A673 (cell line): ENCODE measurements at regions of chr11 and their contacts with region 1.

Region 1: GRCh38 chr11:131694526-131695424 is 324.4 kb downstream of the NTM start:
- DNase-seq: peak; percentile 87
- H3K4me3 ChIP-seq: no peak overlapping the region
- H3K27ac ChIP-seq: no peak overlapping the region
- H3K4me1 ChIP-seq: peaks cover 7% of the 10 kb centered on the region
- H3K27me3 ChIP-seq: no peaks in the 10 kb centered on the region
- CTCF ChIP-seq: peak; percentile 93

Region 2: GRCh38 chr11:131584785-131585592 is 109.8 kb before region 1 on chr11:
- CTCF ChIA-PET with region 1: no interaction called
- POLR2A ChIA-PET with region 1: no interaction called
- intact Hi-C with region 1: no loop called
- DNase-seq: peak; percentile 27
- H3K4me3 ChIP-seq: no peak overlapping the region
- H3K27ac ChIP-seq: no peak overlapping the region
- H3K4me1 ChIP-seq: no peaks in the 10 kb centered on the region
- H3K27me3 ChIP-seq: peaks cover 48% of the 10 kb centered on the region
- CTCF ChIP-seq: peak; percentile 50

Region 3: GRCh38 chr11:131658952-131659351 is 35.8 kb before region 1 on chr11:
- CTCF ChIA-PET with region 1: no interaction called
- POLR2A ChIA-PET with region 1: no interaction called
- intact Hi-C with region 1: no loop called
- DNase-seq: no peak
- H3K4me3 ChIP-seq: no peak overlapping the region
- H3K27ac ChIP-seq: no peak overlapping the region
- H3K4me1 ChIP-seq: no peaks in the 10 kb centered on the region
- H3K27me3 ChIP-seq: peaks cover 62% of the 10 kb centered on the region
- CTCF ChIP-seq: no peak

Region 4: DNA sequence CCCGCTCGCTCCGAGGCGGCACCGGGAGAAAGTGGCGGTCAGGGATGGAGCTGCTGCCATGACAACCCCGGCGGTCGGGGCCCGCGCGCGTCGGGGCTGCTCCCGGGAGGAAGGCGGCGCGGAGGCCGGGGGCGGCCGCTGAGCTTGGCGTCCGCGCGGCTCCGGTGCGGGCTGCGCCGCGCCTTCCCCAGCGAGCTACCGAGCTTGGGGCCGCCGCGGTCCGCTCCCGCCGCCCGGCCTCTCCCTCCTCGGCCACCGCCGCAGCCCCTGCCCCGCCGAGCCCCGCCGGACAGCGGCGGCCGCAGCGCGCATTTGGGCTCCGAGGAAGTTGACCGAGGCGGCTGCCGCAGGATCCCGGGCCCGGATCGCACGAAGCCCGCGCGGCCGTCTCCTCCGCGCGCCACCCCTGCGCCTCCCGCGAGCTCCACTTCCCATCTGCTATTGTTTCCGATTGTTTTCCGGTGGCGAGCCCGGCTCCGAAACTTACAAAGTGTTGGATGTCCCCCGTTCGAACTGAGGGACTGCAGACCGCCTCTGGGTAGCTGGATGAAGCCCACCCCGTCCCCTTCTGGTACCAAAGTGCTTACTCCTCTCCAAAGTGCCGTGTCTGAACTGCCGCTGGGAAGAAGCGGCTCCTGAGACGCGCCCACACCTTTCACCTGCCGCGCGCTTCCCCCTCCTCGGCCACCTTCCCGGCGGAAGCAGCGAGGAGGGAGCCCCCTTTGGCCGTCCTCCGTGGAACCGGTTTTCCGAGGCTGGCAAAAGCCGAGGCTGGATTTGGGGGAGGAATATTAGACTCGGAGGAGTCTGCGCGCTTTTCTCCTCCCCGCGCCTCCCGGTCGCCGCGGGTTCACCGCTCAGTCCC is 216.0 kb after region 1 on chr11:
- CTCF ChIA-PET with region 1: interaction called, 10 read pairs
- POLR2A ChIA-PET with region 1: no interaction called
- intact Hi-C with region 1: loop called (anchors 5 kb)
- DNase-seq: peak; percentile 56
- H3K4me3 ChIP-seq: peak overlapping the region; percentile 62
- H3K27ac ChIP-seq: peak overlapping the region; percentile 91
- H3K4me1 ChIP-seq: peaks cover 71% of the 10 kb centered on the region
- H3K27me3 ChIP-seq: no peaks in the 10 kb centered on the region
- CTCF ChIP-seq: no peak

Region 5: DNA sequence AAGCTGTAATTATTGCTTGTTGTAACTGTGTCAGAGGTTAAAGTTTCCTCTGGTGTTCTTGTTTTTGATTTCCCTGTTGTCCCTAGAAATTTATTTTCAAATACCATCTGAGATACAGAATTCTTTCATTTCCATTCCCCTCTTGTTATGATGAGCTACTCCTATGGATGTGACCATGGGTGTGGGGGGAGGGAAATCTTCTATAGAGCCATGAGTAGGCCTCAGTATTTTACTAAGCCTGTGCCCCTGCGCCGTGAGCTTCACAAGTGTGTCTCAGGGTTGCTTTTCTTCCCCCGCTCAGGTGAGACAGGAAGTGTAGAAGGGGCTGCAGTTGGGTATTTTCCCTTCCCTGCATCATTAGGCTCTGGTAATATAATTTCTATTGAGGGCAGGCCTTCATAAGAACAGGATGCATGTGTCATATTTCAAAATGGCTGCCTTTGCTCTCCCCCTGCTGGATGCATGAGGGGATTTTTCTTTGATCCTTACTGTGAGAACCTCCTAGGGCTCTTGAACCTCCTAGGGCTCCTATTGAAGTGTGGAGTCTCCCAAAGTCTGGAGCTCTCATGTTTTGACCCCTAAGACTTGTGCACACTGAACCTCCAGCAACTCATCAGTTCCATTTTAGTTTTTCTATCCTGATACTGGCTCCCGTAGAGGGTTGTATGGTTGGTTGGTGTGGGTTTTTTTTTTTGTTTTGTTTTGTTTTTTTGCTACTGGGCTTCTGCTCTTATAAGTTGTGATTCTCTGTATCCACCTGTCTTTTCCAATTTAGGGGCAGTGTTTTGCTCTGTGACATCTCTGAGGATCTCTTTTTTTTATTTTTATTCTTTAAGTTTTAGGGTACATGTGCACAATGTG is 333.8 kb after region 1 on chr11:
- CTCF ChIA-PET with region 1: no interaction called
- POLR2A ChIA-PET with region 1: no interaction called
- intact Hi-C with region 1: loop called (anchors 5 kb)
- DNase-seq: peak; percentile 90
- H3K4me3 ChIP-seq: no peak overlapping the region
- H3K27ac ChIP-seq: peak overlapping the region; percentile 60
- H3K4me1 ChIP-seq: peaks cover 54% of the 10 kb centered on the region
- H3K27me3 ChIP-seq: no peaks in the 10 kb centered on the region
- CTCF ChIP-seq: peak; percentile 78

Region 6: DNA sequence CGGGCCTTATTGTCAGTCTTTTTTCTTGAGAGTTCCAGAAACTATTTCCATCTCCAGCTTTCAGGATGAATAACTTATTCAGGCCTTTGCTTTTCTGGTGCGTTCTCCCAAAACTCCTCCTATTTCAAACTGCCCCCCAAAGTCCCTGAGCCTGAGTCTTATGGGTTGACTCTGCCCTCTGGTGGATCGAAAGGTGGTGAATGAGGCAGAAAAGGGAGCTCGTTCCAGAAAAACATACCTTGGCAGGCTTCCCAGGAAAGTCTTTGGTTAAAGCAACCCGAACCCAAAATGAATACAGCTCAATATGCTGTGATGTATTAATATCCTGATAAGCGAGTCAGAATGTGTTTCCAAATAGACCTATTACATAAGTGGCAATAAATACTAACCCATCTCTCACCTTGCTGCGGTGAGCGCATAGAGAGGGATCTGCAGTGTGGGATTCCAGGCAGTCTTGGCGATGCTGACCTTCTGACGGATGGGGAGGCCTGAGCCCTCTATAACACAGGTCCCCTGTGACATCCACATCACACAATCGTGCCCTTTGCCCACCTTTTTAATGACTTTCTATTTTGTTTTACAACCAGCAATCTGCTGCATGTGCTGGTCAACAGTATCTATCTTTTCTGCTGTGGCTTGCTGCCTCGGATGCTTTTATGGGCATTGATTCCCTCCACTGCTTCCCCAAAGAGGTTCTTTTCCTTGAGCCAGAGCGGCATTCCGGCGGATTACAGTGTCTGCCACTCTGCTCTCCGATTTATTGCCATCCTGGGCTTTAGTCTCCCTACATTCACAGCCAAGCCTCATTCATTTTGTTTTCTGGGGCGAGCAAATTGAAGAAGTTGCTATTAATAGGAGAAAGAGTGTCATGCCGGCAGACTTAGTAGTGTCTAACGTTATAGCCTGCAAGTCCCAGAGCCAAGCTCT is 432.5 kb after region 1 on chr11:
- CTCF ChIA-PET with region 1: no interaction called
- POLR2A ChIA-PET with region 1: no interaction called
- intact Hi-C with region 1: loop called (anchors 10 kb)
- DNase-seq: peak; percentile 90
- H3K4me3 ChIP-seq: no peak overlapping the region
- H3K27ac ChIP-seq: peak overlapping the region; percentile 72
- H3K4me1 ChIP-seq: peaks cover 21% of the 10 kb centered on the region
- H3K27me3 ChIP-seq: no peaks in the 10 kb centered on the region
- CTCF ChIP-seq: peak; percentile 78

Region 7: GRCh38 chr11:132402071-132402684 is 707.4 kb after region 1 on chr11:
- CTCF ChIA-PET with region 1: interaction called, 3 read pairs
- POLR2A ChIA-PET with region 1: no interaction called
- intact Hi-C with region 1: loop called (anchors 10 kb)
- DNase-seq: peak; percentile 68
- H3K4me3 ChIP-seq: no peak overlapping the region
- H3K27ac ChIP-seq: no peak overlapping the region
- H3K4me1 ChIP-seq: no peaks in the 10 kb centered on the region
- H3K27me3 ChIP-seq: peaks cover 65% of the 10 kb centered on the region
- CTCF ChIP-seq: peak; percentile 50

Region 8: DNA sequence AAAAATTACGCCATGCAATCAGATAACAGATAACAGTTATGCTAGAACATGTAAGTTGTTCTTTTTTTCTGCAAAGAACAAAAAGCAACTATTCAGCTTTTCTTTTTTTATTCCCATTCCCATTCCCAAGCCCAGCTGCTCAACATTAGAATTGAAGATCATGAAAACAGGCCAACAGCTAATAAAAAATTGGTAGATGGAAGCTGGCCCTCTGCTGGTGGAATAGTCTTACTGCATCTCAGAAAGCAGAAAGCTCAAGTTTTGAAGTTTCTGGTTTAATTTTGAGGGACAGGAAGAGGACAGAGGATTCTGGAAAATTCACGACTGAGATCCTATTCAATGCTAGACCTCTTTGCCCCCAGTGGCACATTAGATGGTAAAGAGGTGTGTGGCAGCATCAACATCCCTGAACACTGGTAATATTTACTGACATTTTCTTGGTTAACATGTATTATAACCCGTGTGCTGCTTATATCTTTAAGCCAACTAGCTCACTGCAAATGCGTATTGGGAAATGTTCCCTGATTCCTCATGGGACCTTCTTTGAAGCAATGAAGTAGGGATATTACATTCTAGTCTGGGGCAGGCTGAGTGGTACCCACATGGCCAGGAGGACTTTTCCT is 1246.4 kb after region 1 on chr11:
- CTCF ChIA-PET with region 1: no interaction called
- POLR2A ChIA-PET with region 1: no interaction called
- intact Hi-C with region 1: loop called (anchors 10 kb)
- DNase-seq: peak; percentile 60
- H3K4me3 ChIP-seq: no peak overlapping the region
- H3K27ac ChIP-seq: no peak overlapping the region
- H3K4me1 ChIP-seq: peaks cover 5% of the 10 kb centered on the region
- H3K27me3 ChIP-seq: peaks cover 27% of the 10 kb centered on the region
- CTCF ChIP-seq: peak; percentile 90

Region 9: DNA sequence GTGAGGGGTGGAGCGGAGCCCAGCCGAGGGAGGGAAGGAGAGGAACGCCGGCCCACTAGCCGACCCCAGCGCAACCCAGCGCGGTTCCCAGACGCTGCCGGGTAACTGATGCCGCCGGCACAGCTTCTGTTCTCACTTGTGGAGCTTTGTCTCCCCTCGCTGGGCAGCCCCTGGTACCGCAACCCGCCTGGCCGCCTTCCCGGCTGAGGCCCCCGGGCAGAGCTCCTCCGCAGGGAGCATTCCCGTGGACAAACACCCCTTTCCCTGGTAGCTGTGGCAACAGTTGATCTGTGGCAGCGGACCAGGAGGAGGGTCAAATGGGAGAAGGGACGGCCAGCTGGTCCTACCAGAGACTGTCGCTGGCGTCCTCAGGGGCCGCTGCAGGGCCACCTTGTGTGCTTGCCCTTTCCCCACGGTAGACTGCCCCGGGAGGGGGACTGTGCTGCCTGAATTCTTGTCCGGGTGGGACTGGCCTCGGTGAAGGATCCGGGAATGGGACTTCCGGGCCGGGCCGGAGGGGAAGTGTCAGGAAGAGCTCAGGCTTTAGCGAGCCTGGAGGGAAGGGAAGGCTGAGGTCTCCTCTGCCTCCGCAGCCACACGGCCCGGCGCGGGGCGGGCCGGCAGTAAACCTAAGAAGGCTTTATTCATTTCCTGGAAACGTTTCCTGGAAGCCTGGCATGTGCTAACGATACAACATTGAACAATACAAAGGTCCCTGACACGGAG is 1369.5 kb after region 1 on chr11:
- CTCF ChIA-PET with region 1: interaction called, 4 read pairs
- POLR2A ChIA-PET with region 1: no interaction called
- intact Hi-C with region 1: loop called (anchors 2 kb)
- DNase-seq: peak; percentile 85
- H3K4me3 ChIP-seq: peak overlapping the region; percentile 21
- H3K27ac ChIP-seq: no peak overlapping the region
- H3K4me1 ChIP-seq: no peaks in the 10 kb centered on the region
- H3K27me3 ChIP-seq: no peaks in the 10 kb centered on the region
- CTCF ChIP-seq: peak; percentile 82